ENCODE measurements at regions of chr10 and their contacts with region 1.

Region 1: DNA sequence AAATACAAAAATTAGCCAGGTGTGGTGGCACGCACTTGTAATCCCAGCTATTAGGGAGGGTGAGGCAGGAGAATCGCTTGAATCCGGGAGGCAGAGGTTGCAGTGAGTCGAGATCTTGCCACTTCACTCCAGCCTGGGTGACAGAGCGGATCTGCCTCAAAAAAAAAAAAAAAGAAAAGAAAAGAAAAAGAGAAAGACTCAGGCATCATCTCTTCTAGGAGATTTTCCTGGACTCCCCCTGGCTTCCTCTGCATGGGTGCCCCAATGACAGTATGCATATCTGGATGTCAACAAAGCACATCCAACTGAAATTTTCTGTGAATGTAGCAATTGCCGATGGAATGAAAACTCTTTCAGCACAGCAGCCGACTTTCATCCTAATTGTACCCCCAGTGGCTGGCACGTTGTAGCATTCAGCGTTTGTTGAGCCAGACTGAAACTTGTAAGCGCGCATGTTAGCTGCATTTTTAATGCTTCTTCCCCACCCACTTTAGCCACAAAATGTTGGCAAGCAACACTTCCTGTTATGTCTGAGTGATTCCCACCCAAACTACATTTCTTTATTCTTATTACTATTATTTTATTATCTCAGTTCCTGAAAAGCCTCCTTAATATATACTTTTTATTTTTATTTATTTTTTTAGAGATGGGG is 70.2 kb downstream of the PRTFDC1 start:
- DNase-seq: peak; percentile 71
- H3K4me3 Mint-ChIP-seq: peak overlapping the region; percentile 13
- H3K27ac Mint-ChIP-seq: no peak overlapping the region
- H3K4me1 Mint-ChIP-seq: peaks cover 44% of the 10 kb centered on the region
- H3K27me3 Mint-ChIP-seq: no peaks in the 10 kb centered on the region

Region 2: DNA sequence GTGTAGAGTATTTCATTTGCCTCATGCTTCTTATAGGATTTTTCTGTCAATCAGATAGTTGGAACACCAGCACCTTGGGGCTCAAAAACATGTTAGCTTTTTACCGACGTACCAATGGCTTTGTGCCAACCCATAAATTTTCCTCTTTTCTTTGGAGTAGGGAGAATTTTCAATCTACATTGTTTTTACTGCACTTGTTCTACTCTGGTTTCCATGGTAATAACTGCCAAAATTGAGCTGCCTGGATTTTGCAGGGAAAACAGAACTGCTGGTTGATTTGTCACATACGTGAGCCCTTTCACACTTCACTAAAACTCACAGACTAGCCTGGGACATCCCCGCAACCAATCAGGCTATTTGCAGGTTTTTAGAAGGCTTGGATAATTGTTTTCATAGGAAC is 348.2 kb before region 1 on chr10:
- CTCF ChIA-PET with region 1: no interaction called
- intact Hi-C with region 1: no loop called
- DNase-seq: no peak
- H3K4me3 Mint-ChIP-seq: no peak overlapping the region
- H3K27ac Mint-ChIP-seq: no peak overlapping the region
- H3K4me1 Mint-ChIP-seq: no peaks in the 10 kb centered on the region
- H3K27me3 Mint-ChIP-seq: peaks cover 9% of the 10 kb centered on the region

Region 3: GRCh38 chr10:24617771-24618391 is 264.3 kb before region 1 on chr10:
- CTCF ChIA-PET with region 1: no interaction called
- intact Hi-C with region 1: loop called (anchors 5 kb)
- DNase-seq: peak; percentile 70
- H3K4me3 Mint-ChIP-seq: peak overlapping the region; percentile 3
- H3K27ac Mint-ChIP-seq: no peak overlapping the region
- H3K4me1 Mint-ChIP-seq: peaks cover 29% of the 10 kb centered on the region
- H3K27me3 Mint-ChIP-seq: no peaks in the 10 kb centered on the region

Region 4: GRCh38 chr10:24901686-24902399 is 19.7 kb after region 1 on chr10:
- CTCF ChIA-PET with region 1: interaction called, 9 read pairs
- intact Hi-C with region 1: loop called (anchors 1 kb)
- DNase-seq: peak; percentile 37
- H3K4me3 Mint-ChIP-seq: no peak overlapping the region
- H3K27ac Mint-ChIP-seq: no peak overlapping the region
- H3K4me1 Mint-ChIP-seq: peaks cover 33% of the 10 kb centered on the region
- H3K27me3 Mint-ChIP-seq: peaks cover 2% of the 10 kb centered on the region

Region 5: DNA sequence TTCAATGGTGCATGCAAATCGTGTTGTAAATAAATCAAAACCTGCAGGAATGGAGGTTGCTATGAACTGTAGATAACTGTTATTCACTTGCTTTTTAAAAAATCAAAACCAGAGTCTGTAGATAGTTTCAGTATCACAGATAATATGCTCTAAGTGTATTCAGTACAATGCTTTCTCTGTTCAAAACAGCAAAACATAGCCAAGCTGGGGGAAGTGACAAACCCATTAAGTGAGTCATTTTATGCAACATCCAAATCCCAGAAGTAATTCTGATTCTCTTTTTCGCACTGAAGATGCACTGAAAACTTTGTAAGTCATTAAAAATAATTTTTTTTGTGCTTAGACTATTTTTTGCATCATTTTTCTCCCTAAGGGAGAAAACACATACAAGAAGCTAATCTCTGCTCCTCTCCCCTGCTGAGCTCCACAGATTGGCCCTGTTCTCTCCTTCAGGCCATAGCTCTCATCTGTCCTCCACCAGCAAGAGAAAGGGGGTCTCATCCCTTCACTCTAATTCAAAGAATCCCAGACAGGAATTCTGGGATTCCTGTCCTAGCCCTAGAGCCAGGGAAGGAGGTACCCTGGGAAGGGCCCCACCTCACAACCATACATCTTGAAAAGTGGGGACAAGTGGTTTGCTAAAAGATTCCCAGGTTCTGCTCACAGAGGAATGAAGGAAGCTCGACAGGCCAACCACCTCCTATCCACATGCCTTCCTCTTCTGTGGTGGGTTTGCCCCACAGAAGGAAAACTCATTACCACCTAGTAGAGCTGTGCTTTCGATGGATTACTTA is 65.3 kb after region 1 on chr10:
- CTCF ChIA-PET with region 1: interaction called, 4 read pairs
- intact Hi-C with region 1: loop called (anchors 10 kb)
- DNase-seq: no peak
- H3K4me3 Mint-ChIP-seq: no peak overlapping the region
- H3K27ac Mint-ChIP-seq: no peak overlapping the region
- H3K4me1 Mint-ChIP-seq: peaks cover 14% of the 10 kb centered on the region
- H3K27me3 Mint-ChIP-seq: no peaks in the 10 kb centered on the region